Activated CD8-positive, alpha-beta memory T cell treated with anti-CD3 and anti-CD28 coated beads, Interleukin-2, amount 10 ng/mL, durations not matched to agents 7 days and 5 days (primary cell): ENCODE measurements at regions of chr11 and their contacts with region 1.

Region 1: DNA sequence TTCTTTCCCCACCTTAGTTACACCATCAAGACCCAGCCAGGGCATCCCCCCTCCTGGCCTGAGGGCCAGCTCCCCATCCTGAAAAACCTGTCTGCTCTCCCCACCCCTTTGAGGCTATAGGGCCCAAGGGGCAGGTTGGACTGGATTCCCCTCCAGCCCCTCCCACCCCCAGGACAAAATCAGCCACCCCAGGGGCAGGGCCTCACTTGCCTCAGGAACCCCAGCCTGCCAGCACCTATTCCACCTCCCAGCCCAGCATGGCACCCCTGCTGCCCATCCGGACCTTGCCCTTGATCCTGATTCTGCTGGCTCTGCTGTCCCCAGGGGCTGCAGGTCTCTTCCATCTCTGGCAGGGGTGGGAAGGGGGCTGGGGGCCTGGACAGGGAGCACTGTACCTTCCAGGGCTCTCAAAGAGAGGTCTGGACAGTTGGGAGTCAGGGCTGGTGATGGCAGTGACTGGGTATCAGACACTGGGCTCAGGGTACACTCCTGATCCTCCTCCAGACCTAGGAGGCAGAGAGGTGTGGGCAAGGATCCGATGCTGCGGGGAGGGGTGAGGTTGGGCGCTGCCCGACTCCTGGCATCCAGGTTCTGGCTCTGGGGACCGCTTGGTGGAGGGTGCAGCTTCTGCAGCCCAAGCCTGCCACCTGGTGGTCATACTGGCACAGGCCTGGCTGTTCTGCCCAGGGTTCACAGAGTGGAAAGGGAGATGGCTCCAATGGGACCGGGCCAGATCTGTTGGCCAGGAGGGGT is at the start of gene UPK2:
- DNase-seq: peak; percentile 90
- ATAC-seq: peak; percentile 100
- H3K4me3 Mint-ChIP-seq: no peak within 1 kb of the TSS
- H3K27ac Mint-ChIP-seq: no peak within 1 kb of the TSS
- H3K4me1 Mint-ChIP-seq: no peaks in the 10 kb centered on the region
- H3K27me3 Mint-ChIP-seq: peaks cover 2% of the 10 kb centered on the region
- total RNA-seq, gene UPK2: not detected

Region 2: GRCh38 chr11:118907051-118908042 is 48.9 kb before region 1 on chr11:
- CTCF ChIA-PET with region 1: interaction called, 21 read pairs
- DNase-seq: peak; percentile 91
- ATAC-seq: peak; percentile 79
- H3K4me3 Mint-ChIP-seq: no peak overlapping the region
- H3K27ac Mint-ChIP-seq: no peak overlapping the region
- H3K4me1 Mint-ChIP-seq: peaks cover 27% of the 10 kb centered on the region
- H3K27me3 Mint-ChIP-seq: no peaks in the 10 kb centered on the region

Region 3: DNA sequence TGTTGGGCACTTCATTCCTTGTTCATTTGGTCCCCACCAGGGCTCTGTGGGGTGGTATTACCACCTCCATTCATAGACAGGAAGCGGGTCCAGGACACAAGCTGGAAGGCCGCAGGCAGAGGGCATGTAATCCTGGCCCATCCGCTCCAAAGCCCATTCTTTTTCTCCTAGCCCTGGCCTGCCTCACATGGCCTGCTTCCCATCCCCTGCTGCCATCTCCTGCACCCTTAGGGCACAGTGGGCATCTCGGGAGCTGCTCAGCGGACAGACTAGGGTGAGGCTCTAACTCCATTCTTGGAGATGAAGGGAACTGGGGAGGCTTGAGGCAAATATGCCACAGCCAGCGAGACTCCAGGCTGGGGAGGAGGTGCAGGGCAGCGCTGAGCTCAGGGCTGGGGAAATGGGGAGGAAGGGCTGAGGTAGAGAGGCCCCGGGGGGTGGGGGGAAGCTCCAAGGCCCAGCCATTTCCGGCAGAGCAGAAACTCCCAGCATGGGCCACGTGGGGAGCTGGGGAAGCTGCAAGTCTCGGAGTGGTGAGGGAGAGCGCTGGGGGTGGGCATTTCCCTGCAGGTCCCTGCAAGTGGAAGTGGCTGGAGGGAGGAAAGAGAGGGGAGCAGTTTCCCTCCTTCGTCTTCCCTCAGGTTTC is 16.2 kb before region 1 on chr11:
- CTCF ChIA-PET with region 1: interaction called, 10 read pairs
- DNase-seq: peak; percentile 69
- ATAC-seq: peak; percentile 82
- H3K4me3 Mint-ChIP-seq: no peak overlapping the region
- H3K27ac Mint-ChIP-seq: peak overlapping the region; percentile 32
- H3K4me1 Mint-ChIP-seq: peaks cover 28% of the 10 kb centered on the region
- H3K27me3 Mint-ChIP-seq: peaks cover 8% of the 10 kb centered on the region

Region 4: DNA sequence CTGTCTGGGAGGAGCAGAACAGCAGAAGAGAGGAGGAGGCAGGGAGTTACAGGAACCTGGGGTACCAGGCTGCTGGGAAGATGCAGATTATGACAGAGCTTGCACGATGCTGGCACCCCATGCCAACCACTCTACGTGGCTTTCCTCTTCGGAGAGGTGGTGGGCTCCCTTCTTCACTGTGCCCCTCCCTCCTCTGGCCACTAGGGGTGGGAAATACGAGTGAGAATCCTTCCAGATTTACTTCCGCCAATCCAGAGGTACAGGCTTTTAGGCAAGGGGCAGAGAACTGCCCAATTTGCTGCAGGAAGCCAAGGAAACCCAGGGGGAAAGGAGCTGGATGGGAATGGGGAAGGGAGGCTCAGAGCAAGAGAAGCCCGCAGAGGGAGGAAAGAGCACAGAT is 88.4 kb after region 1 on chr11:
- CTCF ChIA-PET with region 1: no interaction called
- DNase-seq: no peak
- ATAC-seq: no peak
- H3K4me3 Mint-ChIP-seq: no peak overlapping the region
- H3K27ac Mint-ChIP-seq: no peak overlapping the region
- H3K4me1 Mint-ChIP-seq: peaks cover 18% of the 10 kb centered on the region
- H3K27me3 Mint-ChIP-seq: no peaks in the 10 kb centered on the region